ENCODE measurements at regions of chr3 and their contacts with region 1.

Region 1: GRCh38 chr3:47324278-47324865 is 41.6 kb downstream of the KLHL18 start:
- DNase-seq: no peak

Region 2: GRCh38 chr3:47250309-47251060 is 73.9 kb before region 1 on chr3:
- intact Hi-C with region 1: loop called (anchors 2 kb)
- DNase-seq: no peak

Region 3: DNA sequence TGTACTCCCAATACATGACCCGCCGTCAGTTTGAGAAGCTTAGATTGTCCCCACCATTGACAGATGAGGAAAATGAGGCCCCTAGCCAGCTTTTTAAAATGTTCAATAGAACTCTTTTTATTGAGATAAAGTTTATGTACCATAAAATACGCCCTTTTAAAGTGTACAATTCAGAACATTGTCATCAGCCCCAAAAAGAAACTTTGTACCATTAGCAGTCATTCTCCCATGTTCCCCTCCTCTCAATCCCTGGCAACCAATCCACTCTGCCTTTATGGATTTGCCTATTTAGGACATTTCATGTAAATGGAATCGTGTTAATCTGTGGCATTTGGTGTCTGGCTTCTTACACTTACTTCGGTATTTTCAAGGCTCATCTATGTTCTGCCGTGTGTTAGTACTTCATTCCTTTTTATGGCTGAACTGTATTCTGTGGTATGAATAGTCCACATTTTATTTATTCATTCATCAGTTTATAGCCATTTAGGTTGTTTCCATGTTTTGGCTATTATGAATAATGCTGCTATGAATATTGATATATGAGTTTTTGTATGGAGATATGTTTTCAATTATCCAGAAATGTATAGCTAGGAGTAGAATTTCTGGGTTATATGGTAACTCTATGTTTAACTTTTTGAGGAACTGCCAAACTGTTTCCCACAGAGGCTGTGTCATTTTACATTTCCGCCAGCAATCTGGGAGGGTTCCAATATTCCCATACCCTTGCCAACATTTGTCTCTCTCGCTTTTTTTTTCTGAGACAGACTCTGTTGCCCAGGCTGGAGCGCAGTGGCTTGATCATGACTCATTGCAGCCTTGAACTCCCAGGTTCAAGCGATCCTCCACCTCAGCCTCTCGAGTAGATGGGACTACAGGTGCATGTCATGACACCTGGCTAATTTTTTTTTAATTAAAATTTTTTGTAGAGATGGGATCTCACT is 41.1 kb after region 1 on chr3:
- intact Hi-C with region 1: loop called (anchors 5 kb)
- DNase-seq: no peak

Region 4: GRCh38 chr3:47416041-47416440 is 91.7 kb after region 1 on chr3:
- intact Hi-C with region 1: no loop called
- DNase-seq: no peak